ENCODE measurements at regions of chr1 and their contacts with region 1.

Region 1: GRCh38 chr1:12619792-12620487 is 1.9 kb upstream of the DHRS3 start:
- DNase-seq: peak; percentile 88
- ATAC-seq: peak; percentile 39
- H3K4me3 Mint-ChIP-seq: peak overlapping the region; percentile 95
- H3K27ac Mint-ChIP-seq: no peak overlapping the region
- H3K4me1 Mint-ChIP-seq: peaks cover 43% of the 10 kb centered on the region
- H3K27me3 Mint-ChIP-seq: no peaks in the 10 kb centered on the region

Region 2: GRCh38 chr1:12067900-12068821 is 551.8 kb before region 1 on chr1:
- CTCF ChIA-PET with region 1: no interaction called
- POLR2A ChIA-PET with region 1: no interaction called
- intact Hi-C with region 1: loop called in 1 of 2 experiments (anchors 5 kb)
- DNase-seq: peak; percentile 87
- ATAC-seq: peak; percentile 80
- H3K4me3 Mint-ChIP-seq: peak overlapping the region; percentile 62
- H3K27ac Mint-ChIP-seq: peak overlapping the region; percentile 95
- H3K4me1 Mint-ChIP-seq: peaks cover 57% of the 10 kb centered on the region
- H3K27me3 Mint-ChIP-seq: peaks cover 35% of the 10 kb centered on the region

Region 3: GRCh38 chr1:12275369-12275768 is 344.6 kb before region 1 on chr1:
- CTCF ChIA-PET with region 1: interaction called, 15 read pairs
- POLR2A ChIA-PET with region 1: no interaction called
- intact Hi-C with region 1: loop called (anchors 1 kb)
- DNase-seq: peak; percentile 74
- ATAC-seq: no peak
- H3K4me3 Mint-ChIP-seq: no peak overlapping the region
- H3K27ac Mint-ChIP-seq: no peak overlapping the region
- H3K4me1 Mint-ChIP-seq: no peaks in the 10 kb centered on the region
- H3K27me3 Mint-ChIP-seq: no peaks in the 10 kb centered on the region

Region 4: GRCh38 chr1:12314333-12314903 is 305.5 kb before region 1 on chr1:
- CTCF ChIA-PET with region 1: interaction called, 11 read pairs
- POLR2A ChIA-PET with region 1: interaction called, 3 read pairs
- intact Hi-C with region 1: loop called (anchors 1 kb)
- DNase-seq: no peak
- ATAC-seq: no peak
- H3K4me3 Mint-ChIP-seq: no peak overlapping the region
- H3K27ac Mint-ChIP-seq: no peak overlapping the region
- H3K4me1 Mint-ChIP-seq: no peaks in the 10 kb centered on the region
- H3K27me3 Mint-ChIP-seq: no peaks in the 10 kb centered on the region

Region 5: GRCh38 chr1:12407050-12407961 is 212.6 kb before region 1 on chr1:
- CTCF ChIA-PET with region 1: interaction called, 3 read pairs
- POLR2A ChIA-PET with region 1: no interaction called
- intact Hi-C with region 1: loop called (anchors 1 to 2 kb)
- DNase-seq: peak; percentile 23
- ATAC-seq: peak; percentile 78
- H3K4me3 Mint-ChIP-seq: no peak overlapping the region
- H3K27ac Mint-ChIP-seq: no peak overlapping the region
- H3K4me1 Mint-ChIP-seq: peaks cover 35% of the 10 kb centered on the region
- H3K27me3 Mint-ChIP-seq: no peaks in the 10 kb centered on the region

Region 6: DNA sequence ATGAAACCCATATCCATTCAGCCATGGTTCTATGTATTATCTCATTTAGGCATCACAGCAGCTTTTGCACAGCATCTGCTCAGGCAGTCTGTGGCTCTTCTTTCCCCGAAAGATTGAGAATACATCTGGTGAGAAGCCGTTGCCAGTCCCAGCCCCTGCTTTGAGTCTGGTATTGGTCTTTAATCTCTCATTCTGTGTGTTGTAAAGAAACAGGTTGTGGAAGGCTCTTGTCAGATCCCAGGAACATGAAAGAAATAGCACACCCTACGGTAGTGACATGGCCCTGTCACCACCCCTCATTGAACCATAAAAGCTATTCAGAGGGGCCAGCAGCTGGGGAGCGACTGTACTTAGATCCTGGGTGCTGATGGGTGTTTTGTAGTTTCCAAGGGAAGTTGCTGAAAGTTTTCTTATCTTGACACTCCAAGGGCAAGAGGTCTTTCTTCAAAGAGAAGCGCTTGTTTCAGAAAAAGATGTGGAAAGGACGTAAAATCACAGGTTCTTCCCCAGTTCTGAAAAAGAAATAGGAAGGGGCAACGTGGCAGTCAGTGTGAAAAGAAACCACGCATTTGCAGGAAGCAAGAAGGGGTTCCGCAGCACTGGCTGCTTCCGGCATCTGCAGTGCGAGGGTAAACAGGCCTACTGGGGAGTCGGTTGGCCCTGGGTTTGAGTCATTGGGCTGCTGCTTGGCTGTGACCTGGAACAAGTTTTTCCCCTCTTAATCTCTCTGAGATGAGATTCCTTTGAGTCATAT is 147.0 kb before region 1 on chr1:
- CTCF ChIA-PET with region 1: interaction called, 3 read pairs
- POLR2A ChIA-PET with region 1: no interaction called
- intact Hi-C with region 1: loop called (anchors 1 to 2 kb)
- DNase-seq: peak; percentile 91
- ATAC-seq: peak; percentile 94
- H3K4me3 Mint-ChIP-seq: peak overlapping the region; percentile 59
- H3K27ac Mint-ChIP-seq: peak overlapping the region; percentile 97
- H3K4me1 Mint-ChIP-seq: peaks cover 89% of the 10 kb centered on the region
- H3K27me3 Mint-ChIP-seq: no peaks in the 10 kb centered on the region

Region 7: DNA sequence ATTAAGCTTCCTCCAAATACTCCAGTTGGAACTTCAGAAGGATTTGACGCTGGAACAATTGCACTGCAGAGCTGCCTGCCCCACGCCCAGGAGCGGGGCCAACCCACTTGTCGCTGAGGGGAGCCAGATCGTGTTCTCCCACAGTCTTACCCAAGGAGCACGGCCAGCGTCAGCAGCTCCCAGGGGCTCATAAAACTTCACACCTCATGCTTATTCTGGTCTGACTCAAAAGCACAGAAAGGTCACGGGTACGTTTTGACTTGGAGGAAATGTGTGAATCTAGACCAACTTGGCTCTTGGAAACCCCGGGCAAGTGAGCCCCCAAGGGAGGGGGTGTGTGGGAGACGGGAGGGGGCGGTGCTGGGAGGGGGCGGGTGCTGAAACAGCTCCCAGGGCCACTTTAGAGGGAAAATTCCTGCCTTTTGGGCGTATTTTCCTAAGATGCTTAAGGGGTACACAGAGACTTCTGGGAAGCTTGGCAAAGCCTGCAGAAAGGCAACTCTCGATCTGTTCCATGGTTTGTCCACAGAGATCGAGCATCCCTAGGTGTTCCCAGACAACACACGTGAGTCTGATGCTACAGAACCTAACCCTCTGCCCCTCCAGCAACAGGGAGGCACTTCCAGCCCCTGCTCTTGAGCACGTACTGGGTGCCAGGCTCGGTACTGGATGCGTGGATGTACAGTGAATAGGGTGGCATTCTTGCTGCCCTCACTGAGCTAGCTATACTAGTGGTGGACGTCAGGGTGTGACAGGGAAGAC is 100.8 kb before region 1 on chr1:
- CTCF ChIA-PET with region 1: no interaction called
- POLR2A ChIA-PET with region 1: interaction called, 3 read pairs
- intact Hi-C with region 1: loop called (anchors 2 kb)
- DNase-seq: peak; percentile 82
- ATAC-seq: peak; percentile 98
- H3K4me3 Mint-ChIP-seq: no peak overlapping the region
- H3K27ac Mint-ChIP-seq: peak overlapping the region; percentile 59
- H3K4me1 Mint-ChIP-seq: peaks cover 34% of the 10 kb centered on the region
- H3K27me3 Mint-ChIP-seq: no peaks in the 10 kb centered on the region

Region 8: DNA sequence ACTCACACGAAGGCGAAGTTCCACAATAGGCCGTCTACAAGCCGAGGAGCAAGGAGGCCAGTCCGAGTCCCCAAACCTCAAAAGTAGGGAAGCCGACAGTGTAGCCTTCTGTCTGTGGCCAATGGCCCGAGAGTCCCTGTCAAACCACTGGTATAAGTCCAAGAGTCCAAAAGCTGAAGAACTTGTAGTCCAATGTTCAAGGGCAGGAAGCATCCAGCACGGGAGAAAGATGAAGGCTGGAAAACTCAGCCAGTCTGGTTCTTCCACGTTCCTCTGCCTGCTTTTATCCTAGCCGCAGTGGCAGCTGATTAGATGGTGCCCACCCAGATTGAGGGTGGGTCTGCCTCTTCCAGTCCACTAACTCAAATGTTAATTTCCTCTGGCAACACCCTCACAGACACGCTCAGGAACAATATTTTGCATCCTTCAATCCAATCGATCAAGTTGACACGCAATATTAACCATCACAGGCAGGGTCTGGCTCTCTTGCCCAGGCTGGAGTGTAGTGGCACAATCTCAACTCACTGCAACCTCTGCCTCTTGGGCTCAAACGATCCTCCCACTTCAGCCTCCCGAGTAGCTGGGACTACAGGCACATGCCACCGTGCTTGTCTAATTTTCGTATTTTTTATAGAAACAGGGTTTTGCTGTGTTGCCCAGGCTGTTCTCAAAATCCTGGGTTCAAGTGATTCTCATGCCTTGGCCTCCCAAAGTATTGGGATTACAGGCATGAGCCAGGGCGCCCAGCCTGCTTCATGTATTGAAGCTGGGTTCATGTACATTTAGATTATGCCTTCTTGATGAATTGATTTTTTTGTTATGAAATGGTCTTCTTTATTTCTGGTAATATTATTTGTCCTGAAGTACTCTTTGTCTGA is 87.3 kb before region 1 on chr1:
- CTCF ChIA-PET with region 1: no interaction called
- POLR2A ChIA-PET with region 1: no interaction called
- intact Hi-C with region 1: no loop called
- DNase-seq: no peak
- ATAC-seq: no peak
- H3K4me3 Mint-ChIP-seq: no peak overlapping the region
- H3K27ac Mint-ChIP-seq: no peak overlapping the region
- H3K4me1 Mint-ChIP-seq: peaks cover 10% of the 10 kb centered on the region
- H3K27me3 Mint-ChIP-seq: no peaks in the 10 kb centered on the region

Region 9: DNA sequence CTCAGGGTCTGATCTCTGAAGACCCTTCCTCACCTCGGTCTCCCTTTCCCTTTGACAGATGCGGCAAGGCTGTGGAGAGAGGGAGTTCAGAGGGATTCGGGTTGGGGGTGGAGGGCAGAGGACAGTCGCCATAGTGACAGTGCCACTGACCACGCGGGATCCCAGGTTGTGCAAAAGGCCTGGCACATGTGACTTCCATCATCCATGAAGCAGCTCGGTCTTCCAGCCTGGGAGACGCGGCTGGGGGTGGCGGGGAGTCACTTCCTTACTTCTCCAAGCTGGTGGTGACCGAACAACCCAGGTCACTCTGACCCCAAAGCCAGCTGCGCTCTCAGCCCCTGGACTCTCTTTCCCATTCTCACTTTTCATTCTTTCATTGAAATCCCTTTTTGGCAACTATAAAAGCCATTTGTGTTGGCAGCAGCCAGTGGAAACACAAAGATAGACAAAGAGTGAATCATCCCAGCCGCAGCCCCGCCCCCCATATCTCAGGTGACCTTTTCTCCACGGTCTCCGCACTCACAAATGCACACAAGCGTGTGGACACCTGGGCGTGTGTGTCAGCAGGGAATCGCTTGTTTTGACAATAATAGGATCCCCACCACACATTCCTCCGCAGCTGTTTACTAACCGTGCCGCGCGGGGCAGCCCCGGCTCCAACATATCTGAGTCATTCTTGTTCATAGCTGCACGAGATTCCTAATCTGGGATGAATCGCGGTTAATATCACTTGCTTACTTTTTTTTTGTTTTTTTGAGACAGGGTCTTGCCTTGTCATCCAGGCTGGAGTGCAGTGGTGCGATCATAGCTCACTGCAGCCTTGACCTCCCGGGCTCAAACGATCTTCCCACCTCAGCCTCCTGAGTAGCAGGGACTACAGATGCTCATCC is 70.2 kb before region 1 on chr1:
- CTCF ChIA-PET with region 1: no interaction called
- POLR2A ChIA-PET with region 1: no interaction called
- intact Hi-C with region 1: no loop called
- DNase-seq: peak; percentile 50
- ATAC-seq: no peak
- H3K4me3 Mint-ChIP-seq: no peak overlapping the region
- H3K27ac Mint-ChIP-seq: no peak overlapping the region
- H3K4me1 Mint-ChIP-seq: peaks cover 7% of the 10 kb centered on the region
- H3K27me3 Mint-ChIP-seq: no peaks in the 10 kb centered on the region

Region 10: DNA sequence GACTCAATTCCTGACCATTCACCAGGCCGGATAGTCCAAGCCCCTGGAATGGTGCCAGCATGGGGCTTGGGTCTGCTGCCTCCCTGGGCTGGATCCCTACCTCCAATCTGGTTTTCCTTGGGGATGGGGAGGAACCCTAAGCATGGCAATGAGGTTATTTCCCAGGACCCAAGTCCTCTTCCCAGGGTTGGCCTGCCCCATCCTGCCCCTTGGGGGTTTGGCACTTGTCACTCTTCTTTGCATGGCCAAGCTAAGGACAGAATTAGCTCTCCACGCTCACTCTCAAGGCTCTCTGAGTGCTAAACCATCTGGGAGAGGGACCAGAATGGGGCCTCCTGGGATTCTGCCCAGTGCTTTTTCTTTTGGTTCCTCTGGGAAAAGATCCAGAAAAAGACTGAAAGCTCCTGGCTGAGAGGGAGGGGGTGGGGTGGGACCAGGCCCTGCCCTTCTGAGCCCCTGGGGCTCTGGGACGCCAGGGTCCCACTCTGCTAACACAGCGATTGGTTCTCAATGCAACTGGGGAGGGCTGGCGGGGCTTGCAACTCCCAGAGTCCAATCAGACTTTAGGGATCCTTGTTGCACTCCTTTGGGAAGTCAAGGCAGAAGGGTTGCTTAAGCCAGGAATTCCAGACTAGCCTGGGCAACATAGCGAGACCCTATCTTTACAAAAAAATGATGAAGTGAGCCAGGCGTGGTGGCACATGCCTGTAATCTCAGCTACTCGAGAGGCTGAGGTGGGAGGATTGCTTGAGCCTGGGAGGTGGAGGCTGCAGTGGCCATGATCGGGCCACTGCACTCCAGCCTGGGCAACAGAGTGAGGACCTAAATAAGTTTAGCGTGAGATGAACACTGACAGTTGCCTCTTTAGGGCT is 54.6 kb before region 1 on chr1:
- CTCF ChIA-PET with region 1: no interaction called
- POLR2A ChIA-PET with region 1: no interaction called
- intact Hi-C with region 1: no loop called
- DNase-seq: no peak
- ATAC-seq: no peak
- H3K4me3 Mint-ChIP-seq: no peak overlapping the region
- H3K27ac Mint-ChIP-seq: no peak overlapping the region
- H3K4me1 Mint-ChIP-seq: no peaks in the 10 kb centered on the region
- H3K27me3 Mint-ChIP-seq: no peaks in the 10 kb centered on the region